A673 (cell line): ENCODE measurements at regions of chr10 and their contacts with region 1.

Region 1: GRCh38 chr10:70052462-70053217 is at the start of gene MACROH2A2:
- DNase-seq: peak; percentile 93
- H3K4me3 ChIP-seq: peak within 1 kb of the TSS; percentile 87
- H3K27ac ChIP-seq: peak within 1 kb of the TSS; percentile 100
- H3K4me1 ChIP-seq: peaks cover 78% of the 10 kb centered on the region
- H3K27me3 ChIP-seq: no peaks in the 10 kb centered on the region
- CTCF ChIP-seq: peak; percentile 56
- total RNA-seq, gene MACROH2A2: 301 and 326 TPM in 2 replicates

Region 2: GRCh38 chr10:69408318-69409175 is 644.1 kb before region 1 on chr10:
- CTCF ChIA-PET with region 1: no interaction called
- POLR2A ChIA-PET with region 1: no interaction called
- intact Hi-C with region 1: no loop called
- DNase-seq: peak; percentile 96
- H3K4me3 ChIP-seq: peak overlapping the region; percentile 46
- H3K27ac ChIP-seq: peak overlapping the region; percentile 53
- H3K4me1 ChIP-seq: peaks cover 16% of the 10 kb centered on the region
- H3K27me3 ChIP-seq: no peaks in the 10 kb centered on the region
- CTCF ChIP-seq: peak; percentile 65

Region 3: DNA sequence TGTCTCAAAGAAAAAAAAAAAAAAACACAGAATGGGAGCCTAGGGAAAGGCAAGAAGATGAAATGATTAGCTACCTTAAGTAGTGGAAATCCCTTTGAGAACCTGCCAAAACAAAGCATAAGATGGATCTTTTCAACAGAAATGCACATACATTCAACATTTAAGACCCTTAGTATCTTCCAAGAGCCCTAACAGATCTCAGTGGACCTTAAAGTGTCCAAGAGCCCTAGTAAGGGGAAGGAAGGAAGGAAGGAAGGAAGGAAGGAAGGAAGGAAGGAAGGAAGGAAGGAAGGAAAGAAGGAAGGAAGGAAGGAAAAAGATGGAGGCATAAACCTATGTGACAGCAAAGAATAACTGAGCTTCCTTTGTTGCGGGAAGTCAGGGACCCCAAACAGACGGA is 11.6 kb before region 1 on chr10:
- CTCF ChIA-PET with region 1: no interaction called
- POLR2A ChIA-PET with region 1: interaction called, 19 read pairs
- intact Hi-C with region 1: no loop called
- DNase-seq: peak; percentile 95
- H3K4me3 ChIP-seq: no peak overlapping the region
- H3K27ac ChIP-seq: peak overlapping the region; percentile 98
- H3K4me1 ChIP-seq: peaks cover 24% of the 10 kb centered on the region
- H3K27me3 ChIP-seq: no peaks in the 10 kb centered on the region
- CTCF ChIP-seq: no peak

Region 4: GRCh38 chr10:70296406-70296899 is 243.8 kb after region 1 on chr10:
- CTCF ChIA-PET with region 1: no interaction called
- POLR2A ChIA-PET with region 1: no interaction called
- intact Hi-C with region 1: no loop called
- DNase-seq: no peak
- H3K4me3 ChIP-seq: no peak overlapping the region
- H3K27ac ChIP-seq: no peak overlapping the region
- H3K4me1 ChIP-seq: peaks cover 4% of the 10 kb centered on the region
- H3K27me3 ChIP-seq: no peaks in the 10 kb centered on the region
- CTCF ChIP-seq: no peak